ENCODE measurements at regions of chr7 and their contacts with region 1.

Region 1: DNA sequence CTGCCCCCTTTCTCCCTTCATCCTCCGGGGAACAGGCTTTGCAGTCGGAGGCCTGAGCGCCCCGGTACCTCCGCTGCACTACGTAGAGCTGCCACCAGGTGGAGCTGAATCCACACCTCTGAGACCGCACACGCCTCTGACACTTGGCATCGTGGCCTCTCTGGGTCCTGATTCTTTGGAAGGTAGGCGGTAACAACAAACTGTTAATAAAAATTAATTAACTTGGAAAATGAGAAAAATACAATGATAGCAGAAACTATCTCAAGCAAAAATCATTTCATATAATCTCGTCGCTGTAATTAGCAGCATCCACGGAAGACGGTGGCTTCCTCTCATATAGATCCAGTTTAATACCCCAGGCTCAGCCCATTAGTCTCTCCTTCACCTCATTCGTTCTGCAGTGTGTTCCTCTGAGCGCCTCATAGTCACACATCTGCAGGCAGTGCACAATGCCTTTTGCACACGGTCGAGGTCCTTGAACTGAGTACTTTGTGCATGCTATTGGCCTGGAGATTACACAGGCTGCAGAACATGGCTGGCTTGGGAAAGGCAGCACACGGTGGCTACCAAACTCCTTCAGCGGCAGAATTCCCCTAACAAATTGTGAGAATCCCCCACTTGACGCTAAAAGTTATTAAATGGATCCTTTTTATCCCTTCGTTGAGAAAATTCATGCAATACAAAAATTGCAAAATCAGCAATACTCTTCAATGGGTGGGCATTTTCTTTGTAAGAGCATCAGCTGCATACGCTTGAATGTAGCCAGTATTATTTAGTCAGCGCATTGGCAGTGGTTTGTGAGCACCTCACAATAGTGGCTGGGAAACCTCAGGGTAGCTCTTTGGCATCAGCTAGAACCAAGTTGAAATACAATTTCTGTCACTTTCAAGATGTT is 18.7 kb downstream of the OR9A2 start:
- DNase-seq: peak; percentile 88
- H3K4me3 Mint-ChIP-seq: no peak overlapping the region
- H3K27ac Mint-ChIP-seq: no peak overlapping the region
- H3K4me1 Mint-ChIP-seq: peaks cover 5% of the 10 kb centered on the region
- H3K27me3 Mint-ChIP-seq: peaks cover 5% of the 10 kb centered on the region

Region 2: GRCh38 chr7:141975806-141976523 is 1032.3 kb before region 1 on chr7:
- CTCF ChIA-PET with region 1: interaction called, 3 read pairs
- POLR2A ChIA-PET with region 1: no interaction called
- intact Hi-C with region 1: loop called (anchors 10 kb)
- DNase-seq: peak; percentile 80
- H3K4me3 Mint-ChIP-seq: peak overlapping the region; percentile 70
- H3K27ac Mint-ChIP-seq: no peak overlapping the region
- H3K4me1 Mint-ChIP-seq: peaks cover 5% of the 10 kb centered on the region
- H3K27me3 Mint-ChIP-seq: no peaks in the 10 kb centered on the region

Region 3: GRCh38 chr7:142438235-142438922 is 569.9 kb before region 1 on chr7:
- CTCF ChIA-PET with region 1: no interaction called
- POLR2A ChIA-PET with region 1: no interaction called
- intact Hi-C with region 1: loop called (anchors 10 kb)
- DNase-seq: peak; percentile 45
- H3K4me3 Mint-ChIP-seq: no peak overlapping the region
- H3K27ac Mint-ChIP-seq: no peak overlapping the region
- H3K4me1 Mint-ChIP-seq: peaks cover 55% of the 10 kb centered on the region
- H3K27me3 Mint-ChIP-seq: no peaks in the 10 kb centered on the region

Region 4: DNA sequence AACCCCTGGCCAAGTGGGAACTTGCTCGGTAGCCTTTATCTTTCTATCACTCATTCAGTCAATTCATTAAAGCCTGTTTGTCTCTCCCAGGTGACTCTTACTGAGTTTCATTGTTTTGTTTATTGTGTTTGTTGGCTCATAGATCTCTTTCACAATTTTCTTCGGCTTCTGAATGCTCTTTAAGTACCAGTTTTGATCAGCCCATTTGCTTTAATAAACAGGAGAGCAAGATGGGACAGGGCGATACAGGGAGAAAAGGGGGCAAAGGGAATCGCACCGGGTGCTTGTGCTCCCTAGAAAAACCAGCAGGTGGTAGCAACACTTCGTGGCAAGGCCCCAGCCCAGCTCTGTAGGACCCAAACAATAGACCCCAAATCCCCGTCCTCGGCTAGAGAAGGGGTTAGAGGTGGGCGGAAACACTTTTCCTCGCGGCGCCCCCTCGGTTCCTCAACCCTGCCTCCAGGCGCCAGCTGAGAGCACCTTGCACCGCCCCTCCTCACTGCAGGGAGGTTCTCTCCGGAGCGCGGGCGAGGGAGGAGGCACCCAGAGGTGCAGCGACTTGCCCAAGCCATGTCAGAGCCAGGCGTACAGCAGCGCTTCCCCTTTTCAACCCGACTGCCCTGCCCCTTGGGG is 154.4 kb before region 1 on chr7:
- CTCF ChIA-PET with region 1: interaction called, 16 read pairs
- POLR2A ChIA-PET with region 1: no interaction called
- intact Hi-C with region 1: loop called (anchors 1 kb)
- DNase-seq: peak; percentile 73
- H3K4me3 Mint-ChIP-seq: peak overlapping the region; percentile 93
- H3K27ac Mint-ChIP-seq: peak overlapping the region; percentile 72
- H3K4me1 Mint-ChIP-seq: peaks cover 16% of the 10 kb centered on the region
- H3K27me3 Mint-ChIP-seq: peaks cover 3% of the 10 kb centered on the region

Region 5: DNA sequence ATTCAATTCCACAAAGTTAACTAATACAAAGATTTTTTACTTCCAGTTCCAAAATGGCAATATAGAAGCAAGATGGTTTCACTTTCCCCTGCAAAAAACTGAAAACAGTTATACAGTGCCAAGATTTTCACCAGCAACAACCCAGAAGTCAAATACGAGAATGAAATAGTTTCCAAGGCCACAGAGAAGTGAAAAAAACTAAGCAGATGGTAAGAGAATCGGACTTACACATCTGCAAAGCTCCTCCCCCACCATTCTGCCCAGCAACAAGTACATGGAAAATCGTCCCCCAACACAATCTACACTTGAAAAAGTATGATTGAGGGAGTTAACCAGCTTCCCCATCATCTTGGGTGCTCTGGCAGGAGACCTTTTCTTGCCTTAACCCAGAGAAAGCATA is 15.8 kb before region 1 on chr7:
- CTCF ChIA-PET with region 1: interaction called, 14 read pairs
- POLR2A ChIA-PET with region 1: no interaction called
- intact Hi-C with region 1: no loop called
- DNase-seq: no peak
- H3K4me3 Mint-ChIP-seq: no peak overlapping the region
- H3K27ac Mint-ChIP-seq: no peak overlapping the region
- H3K4me1 Mint-ChIP-seq: no peaks in the 10 kb centered on the region
- H3K27me3 Mint-ChIP-seq: peaks cover 6% of the 10 kb centered on the region

Region 6: DNA sequence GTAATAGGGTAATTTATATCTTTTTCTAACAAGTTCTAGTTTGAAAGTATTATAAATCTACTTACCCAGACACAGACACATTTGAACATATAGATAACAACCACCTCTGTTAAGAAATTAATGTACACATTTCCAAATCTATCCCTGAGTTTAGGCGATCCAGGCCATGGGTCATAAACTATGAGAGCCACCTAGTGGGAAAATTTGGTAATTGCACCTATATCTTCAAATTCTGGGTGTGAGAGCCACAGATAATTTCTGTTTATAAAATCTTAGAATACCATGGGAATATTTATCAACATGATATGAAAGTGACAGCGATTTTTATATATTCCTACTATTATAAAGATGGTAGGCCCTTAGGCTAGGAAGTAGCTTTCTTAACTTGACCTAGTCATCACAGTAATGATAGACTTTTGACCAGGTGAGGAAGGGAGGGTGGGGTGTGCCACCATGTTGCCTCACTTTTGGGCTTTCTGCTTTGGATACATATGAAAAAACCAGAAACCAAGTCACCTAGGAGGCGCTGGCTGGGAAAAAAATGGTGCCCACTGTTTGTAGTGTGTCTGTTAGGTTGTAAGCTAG is 408.4 kb after region 1 on chr7:
- CTCF ChIA-PET with region 1: interaction called, 3 read pairs
- POLR2A ChIA-PET with region 1: no interaction called
- intact Hi-C with region 1: loop called (anchors 5 kb)
- DNase-seq: no peak
- H3K4me3 Mint-ChIP-seq: no peak overlapping the region
- H3K27ac Mint-ChIP-seq: no peak overlapping the region
- H3K4me1 Mint-ChIP-seq: peaks cover 6% of the 10 kb centered on the region
- H3K27me3 Mint-ChIP-seq: no peaks in the 10 kb centered on the region

Measured in activated CD4-positive, alpha-beta memory T cell treated with anti-CD3 and anti-CD28 coated beads for 36 hours (primary cell).